Mucosa of descending colon (tissue), 3 donors: ENCODE measurements at regions of chr5 and their contacts with region 1.

Region 1: GRCh38 chr5:102782311-102782770 is 27.2 kb downstream of the PAM start:
- DNase-seq: no peak
- ATAC-seq: no peak
- H3K4me3 ChIP-seq: no peak overlapping the region
- H3K4me1 ChIP-seq: no peaks in the 10 kb centered on the region
- CTCF ChIP-seq: no peak

Region 2: DNA sequence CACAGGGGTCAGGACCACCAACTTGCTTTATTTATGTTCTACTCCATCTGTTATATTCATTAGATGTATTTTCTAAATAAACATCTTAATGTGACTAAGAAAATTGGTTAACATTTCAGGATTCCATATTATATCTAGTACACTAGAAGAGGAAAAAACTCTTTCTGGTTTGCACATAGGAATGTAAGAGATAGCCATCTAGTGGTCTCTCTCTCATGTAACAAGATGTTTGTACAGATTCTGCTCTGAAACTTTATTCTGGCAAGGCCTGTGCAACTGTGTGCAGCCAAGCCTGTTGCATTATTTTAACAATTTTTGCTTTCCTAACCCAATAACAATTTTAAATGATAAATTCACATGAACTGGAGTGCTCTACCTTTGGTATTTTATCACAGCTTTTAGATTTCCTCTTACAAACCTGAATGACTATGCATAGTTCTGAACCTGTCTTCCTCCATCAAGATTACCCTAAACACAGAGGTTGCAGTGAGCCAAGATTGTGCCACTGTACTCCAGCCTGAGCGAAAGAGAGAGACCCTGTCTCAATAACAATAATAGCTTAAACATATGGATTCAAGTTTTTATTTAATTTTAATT is 189.5 kb after region 1 on chr5:
- intact Hi-C with region 1: loop called in 1 of 2 experiments (anchors 10 kb)
- DNase-seq: no peak
- ATAC-seq: peak; percentile 46
- H3K4me3 ChIP-seq: no peak overlapping the region
- H3K4me1 ChIP-seq: no peaks in the 10 kb centered on the region
- CTCF ChIP-seq: no peak

Region 3: DNA sequence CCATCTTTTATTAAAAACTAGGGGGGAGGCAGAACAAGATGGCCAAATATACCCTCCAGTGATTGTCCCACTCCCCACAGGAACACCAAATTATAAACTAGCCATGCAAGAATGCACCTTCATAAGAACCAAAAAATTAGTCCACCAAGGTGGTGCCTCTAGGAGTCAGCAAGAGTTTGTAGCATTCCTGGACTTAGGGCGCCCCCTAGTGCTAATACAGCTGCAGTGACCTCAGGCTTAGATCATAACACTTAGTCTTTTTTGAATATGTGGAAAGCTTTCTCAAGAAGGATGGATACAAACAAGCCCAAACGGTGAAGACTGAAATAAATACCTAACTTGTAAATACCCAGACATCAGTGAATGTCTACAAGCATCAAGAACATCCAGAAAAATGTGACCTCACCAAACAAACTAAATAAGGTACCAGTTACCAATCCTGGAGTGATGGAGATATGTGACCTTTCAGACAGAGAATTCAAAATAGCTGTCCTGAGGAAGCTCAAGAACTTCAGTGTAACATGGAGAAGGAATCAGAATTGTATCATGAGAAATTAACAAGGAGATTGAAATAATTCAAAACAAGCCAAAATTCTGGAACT is 357.0 kb after region 1 on chr5:
- intact Hi-C with region 1: loop called in 1 of 2 experiments (anchors 10 kb)
- DNase-seq: peak; percentile 49 to 92 (median 72)
- ATAC-seq: peak; percentile 96
- H3K4me3 ChIP-seq: no peak overlapping the region
- H3K4me1 ChIP-seq: peaks cover 8% of the 10 kb centered on the region
- CTCF ChIP-seq: peak; percentile 67